Left cardiac atrium (tissue), 4 donors: ENCODE measurements at regions of chr1 and their contacts with region 1.

Region 1: DNA sequence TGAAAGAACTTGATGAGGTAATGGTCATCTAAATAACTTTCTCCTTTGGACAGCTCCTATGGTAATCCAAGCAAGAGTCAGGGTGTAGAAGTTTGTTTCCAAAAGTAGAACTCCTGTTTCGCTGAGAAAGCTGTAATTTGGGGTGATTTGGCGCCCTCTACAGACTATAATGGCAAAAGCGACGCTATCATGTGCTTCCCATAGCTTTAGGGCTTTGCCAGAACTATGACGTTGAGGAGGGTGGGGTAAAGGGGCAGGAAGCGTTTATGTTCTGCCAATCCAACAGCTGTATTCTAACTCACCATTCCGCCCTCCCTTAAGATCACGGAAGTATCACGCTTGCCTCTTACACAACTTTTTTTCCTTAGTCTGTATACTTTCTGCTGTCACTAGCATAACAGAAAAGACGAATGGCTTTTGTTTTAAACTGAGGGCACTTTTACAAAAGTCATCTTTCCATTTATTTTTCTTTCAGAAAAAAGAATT is at the start of gene FMO4:
- DNase-seq: peak; percentile 85
- ATAC-seq: peak; percentile 100
- total RNA-seq, gene FMO4: 3.1 to 3.8 TPM

Region 2: DNA sequence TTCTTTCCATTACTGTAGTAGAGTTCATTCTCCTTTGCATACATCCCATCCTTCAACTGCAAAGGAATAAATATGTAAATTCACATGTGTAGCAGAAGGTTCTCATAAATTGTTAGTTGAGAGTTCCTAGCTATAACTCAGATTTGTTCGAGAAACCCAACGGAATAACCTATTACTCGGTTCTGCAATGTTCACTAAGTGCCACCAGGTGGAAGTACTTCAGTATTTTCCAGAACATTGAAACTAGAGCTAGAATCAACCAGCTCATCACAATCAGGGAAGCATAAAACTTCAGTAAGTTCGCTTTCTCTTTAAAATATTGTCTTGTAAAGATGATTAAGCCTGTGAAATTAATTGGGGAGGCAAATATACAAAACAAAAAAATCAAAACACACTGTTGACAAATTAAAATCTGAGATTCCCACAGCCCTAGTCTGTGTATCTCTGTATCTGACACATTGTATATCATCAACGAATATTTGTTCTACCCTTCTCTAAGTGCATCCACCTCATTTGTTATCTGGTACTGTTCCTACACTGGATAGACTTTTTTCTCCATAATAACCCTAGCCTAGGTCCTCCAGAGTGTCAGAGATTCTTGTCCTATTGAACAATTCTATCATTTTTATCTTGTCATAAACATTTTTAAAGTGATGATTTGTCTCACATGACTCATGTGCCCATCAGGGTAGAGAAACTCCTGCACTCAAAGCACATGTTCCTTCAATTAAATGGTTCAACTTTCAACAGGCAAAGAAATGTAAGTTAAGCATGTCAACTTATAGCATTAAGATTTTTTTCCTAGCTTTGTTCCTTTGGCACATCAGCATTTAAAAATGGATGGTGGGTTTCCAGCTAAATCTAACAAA is 346.6 kb before region 1 on chr1:
- intact Hi-C with region 1: loop called in 1 of 2 experiments (anchors 5 kb)
- DNase-seq: no peak
- ATAC-seq: peak; percentile 69 to 80

Region 3: GRCh38 chr1:171245458-171246064 is 68.3 kb before region 1 on chr1:
- intact Hi-C with region 1: loop called (anchors 5 kb)
- DNase-seq: no peak
- ATAC-seq: peak; percentile 70 to 77

Region 4: DNA sequence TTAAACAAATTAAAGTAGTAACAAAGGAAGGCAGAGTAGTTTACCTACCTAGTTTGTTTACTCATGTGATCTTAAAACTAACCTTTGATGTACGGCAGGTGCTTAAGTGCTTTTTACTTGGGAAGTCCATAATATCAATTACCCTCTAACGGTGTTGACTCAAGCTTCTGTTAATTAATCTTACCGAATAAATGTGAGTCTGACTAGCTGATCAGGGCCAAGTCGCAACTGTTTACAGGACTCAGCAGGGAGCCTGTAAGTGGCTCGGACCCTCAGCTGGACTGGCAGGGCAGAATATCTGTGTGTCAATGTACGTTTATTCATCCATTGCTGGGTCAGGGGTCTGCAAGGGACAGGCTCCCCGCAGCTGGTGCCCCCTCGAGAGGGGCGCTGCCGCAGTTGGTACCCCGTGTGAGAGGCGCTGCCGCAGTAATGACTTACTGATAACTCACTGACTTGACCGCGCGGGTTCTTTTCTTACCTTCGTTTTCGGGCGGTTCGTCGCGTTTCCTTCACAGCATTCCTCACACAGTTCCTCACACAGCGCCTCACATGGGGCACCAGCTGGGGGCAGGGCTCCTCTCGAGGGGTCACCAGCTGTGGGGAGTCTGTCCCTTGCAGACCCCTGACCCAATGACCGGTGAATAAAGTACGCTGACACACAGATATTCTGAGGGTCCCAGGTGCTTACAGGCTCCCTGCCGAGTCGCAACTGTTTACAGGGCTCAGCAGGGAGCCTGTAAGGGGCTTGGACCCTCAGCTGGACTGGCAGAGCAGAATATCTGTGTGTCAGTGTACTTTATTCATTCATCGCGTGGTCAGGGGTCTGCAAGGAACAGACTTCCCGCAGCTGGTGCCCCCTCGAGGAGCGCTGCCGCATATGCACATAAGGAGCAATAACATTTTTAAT is 62.6 kb before region 1 on chr1:
- intact Hi-C with region 1: loop called (anchors 5 kb)
- DNase-seq: peak; percentile 41
- ATAC-seq: peak; percentile 49 to 51